Right ventricle myocardium inferior (tissue), 1 donor: ENCODE measurements at regions of chr11 and their contacts with region 1.

Region 1: GRCh38 chr11:123357961-123358841 is 71.9 kb upstream of the GRAMD1B start:
- DNase-seq: peak; percentile 65
- ATAC-seq: peak; percentile 60

Region 2: GRCh38 chr11:123129920-123130319 is 228.3 kb before region 1 on chr11:
- intact Hi-C with region 1: no loop called
- DNase-seq: no peak
- ATAC-seq: no peak

Region 3: GRCh38 chr11:123235117-123235655 is 123.0 kb before region 1 on chr11:
- intact Hi-C with region 1: no loop called
- DNase-seq: peak; percentile 83
- ATAC-seq: peak; percentile 38

Region 4: GRCh38 chr11:123301696-123302400 is 56.4 kb before region 1 on chr11:
- intact Hi-C with region 1: loop called (anchors 1 kb)
- DNase-seq: peak; percentile 82
- ATAC-seq: peak; percentile 84

Region 5: DNA sequence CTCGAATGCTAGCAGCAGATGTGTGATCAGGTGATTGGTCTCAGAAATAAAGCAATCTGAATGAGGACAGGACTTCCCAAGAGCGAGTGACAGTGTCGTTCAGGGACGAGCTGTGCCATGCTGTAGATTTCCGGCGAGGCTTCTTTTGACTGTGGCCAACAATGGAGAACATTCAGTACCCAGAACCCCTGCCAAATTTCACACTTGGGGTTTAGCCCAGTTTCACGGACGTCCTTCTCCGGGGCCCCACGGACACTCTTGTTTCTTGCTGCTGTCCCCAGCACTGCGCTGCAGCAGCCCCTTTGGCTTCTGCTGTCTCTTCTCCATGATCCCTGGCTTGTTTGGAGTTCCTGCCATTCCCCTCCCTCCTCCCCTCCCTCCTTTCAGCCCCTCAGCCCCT is 43.2 kb before region 1 on chr11:
- intact Hi-C with region 1: loop called (anchors 2 kb)
- DNase-seq: no peak
- ATAC-seq: peak; percentile 96